Dorsolateral prefrontal cortex (tissue), 120 donors: ENCODE measurements at regions of chr19 and their contacts with region 1.

Region 1: DNA sequence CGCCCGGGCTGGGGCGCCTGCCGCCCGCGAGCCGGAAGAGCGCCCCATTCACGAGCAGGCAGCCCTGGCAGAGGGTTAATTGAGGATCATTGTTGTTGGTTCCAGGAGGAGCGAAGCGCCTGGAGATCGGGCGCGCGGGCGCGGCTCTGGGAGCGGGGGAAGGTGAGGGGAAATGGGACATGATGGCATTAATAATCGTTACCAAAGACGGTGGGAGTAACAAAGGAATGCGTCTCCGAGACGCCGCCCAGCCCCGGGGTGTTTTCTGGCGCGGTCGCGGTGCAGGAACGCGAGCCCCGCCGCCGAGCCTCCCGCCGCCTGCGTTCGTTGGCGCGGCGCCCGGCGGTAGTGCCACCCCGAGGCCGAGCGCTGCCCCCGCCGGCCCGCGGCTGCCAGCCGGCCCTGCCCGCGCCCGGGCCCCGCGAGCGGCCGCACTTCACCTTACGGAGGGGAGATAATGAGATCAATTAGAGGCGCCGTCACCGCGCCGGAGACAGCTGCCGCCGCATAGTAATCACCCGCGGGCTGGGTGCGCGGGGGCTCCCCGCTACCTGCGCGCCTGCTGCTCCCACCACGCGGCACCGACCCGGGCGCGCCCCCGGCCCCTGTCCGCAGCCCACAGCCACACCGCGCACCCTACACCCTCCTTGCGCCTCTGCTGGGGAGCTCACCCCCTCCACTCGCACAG is 2.8 kb downstream of the ZNF536 start:
- DNase-seq: peak in 3 of 10 donors; percentile 30 to 47 (median 37)
- H3K4me3 ChIP-seq: peak overlapping the region; percentile 7 to 74 (median 56)
- H3K27ac ChIP-seq: peak overlapping the region; percentile 9 to 99 (median 92)
- H3K27me3 ChIP-seq: peaks cover 0 to 51% (median 11%) of the 10 kb centered on the region in 45 donors
- CTCF ChIP-seq: peak in 14 of 56 donors; percentile 7 to 35 (median 14)

Region 2: DNA sequence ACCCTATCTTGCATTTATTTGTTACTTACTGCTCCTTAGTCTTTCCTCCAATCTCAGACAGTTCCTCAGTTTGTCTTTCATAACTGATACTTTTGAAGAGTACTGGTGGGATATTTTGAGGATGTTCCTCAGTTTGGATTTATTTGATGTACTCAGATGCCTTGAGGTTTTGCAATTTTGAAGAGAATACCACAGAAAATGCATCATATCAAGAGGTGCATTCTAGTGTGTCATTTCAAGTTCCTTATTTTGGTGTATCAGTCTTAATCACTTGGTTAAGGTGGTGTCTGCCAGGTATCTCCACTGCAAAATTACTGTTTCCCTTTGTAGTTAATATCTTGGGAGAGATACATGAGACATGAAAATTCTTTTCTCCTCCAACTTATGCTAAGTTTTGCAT is 357.8 kb before region 1 on chr19:
- intact Hi-C with region 1: no loop called
- DNase-seq: no peak
- H3K4me3 ChIP-seq: no peak overlapping the region
- H3K27ac ChIP-seq: no peak overlapping the region
- H3K27me3 ChIP-seq: no peaks in the 10 kb centered on the region
- CTCF ChIP-seq: no peak

Region 3: DNA sequence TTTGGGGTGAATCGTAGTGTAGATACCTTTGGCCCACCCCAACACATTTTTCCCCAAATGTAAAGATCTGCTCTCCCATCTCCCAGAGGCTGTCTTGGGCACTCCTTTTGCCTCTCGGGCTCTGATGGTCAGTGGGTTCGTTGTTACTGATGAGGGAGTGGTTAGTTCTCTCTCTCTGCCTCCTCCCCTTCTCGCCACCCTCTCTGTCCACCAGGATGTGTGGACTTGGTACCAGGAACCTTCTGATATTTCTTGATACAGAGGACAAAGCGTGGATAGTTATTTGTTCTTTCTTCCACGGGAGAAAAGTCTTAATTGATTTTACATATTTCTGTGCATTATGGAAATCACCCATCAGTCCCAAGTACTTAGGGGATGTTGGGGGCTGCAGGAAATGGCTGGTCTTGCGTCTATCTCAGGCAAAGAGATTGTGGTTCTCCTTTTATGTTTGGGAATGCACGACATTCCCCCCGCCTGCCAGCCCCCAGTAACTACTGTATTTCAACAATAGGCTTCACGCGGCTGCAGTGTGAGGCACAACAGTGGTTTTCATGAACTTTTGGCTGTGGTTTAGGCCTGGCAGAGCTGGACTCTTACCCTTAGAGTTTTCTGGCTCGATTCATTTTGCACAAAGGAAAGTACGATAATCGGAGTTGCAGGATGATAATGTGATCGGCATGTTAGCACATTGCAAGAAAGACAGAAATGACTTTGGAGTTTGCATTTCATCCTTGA is 81.8 kb before region 1 on chr19:
- intact Hi-C with region 1: loop called in 1 of 2 experiments (anchors 10 kb)
- DNase-seq: peak in 8 of 10 donors; percentile 41 to 82 (median 61)
- H3K4me3 ChIP-seq: peak overlapping the region in 31 of 59 donors; percentile 1 to 56 (median 20)
- H3K27ac ChIP-seq: peak overlapping the region; percentile 24 to 97 (median 87)
- H3K27me3 ChIP-seq: peaks cover 0 to 5% (median 0%) of the 10 kb centered on the region in 45 donors
- CTCF ChIP-seq: peak in 3 of 56 donors; percentile 6 to 15 (median 12)

Region 4: GRCh38 chr19:30441011-30441410 is 66.0 kb after region 1 on chr19:
- intact Hi-C with region 1: loop called in 1 of 2 experiments (anchors 5 kb)
- DNase-seq: peak in 1 of 10 donors; percentile 35
- H3K4me3 ChIP-seq: no peak overlapping the region
- H3K27ac ChIP-seq: peak overlapping the region in 8 of 59 donors; percentile 22 to 57 (median 32)
- H3K27me3 ChIP-seq: peaks cover 0 to 51% (median 7%) of the 10 kb centered on the region in 45 donors
- CTCF ChIP-seq: no peak